Common myeloid progenitor, CD34-positive (primary cell): ENCODE measurements at regions of chr1 and their contacts with region 1.

Region 1: GRCh38 chr1:45339789-45340570 is at the starts of genes MUTYH and TOE1:
- DNase-seq: peak; percentile 90 to 95 (median 93)
- H3K4me3 ChIP-seq: peak within 1 kb of the TSS; percentile 49 to 95 (median 91)
- H3K27ac ChIP-seq: peak within 1 kb of the TSS; percentile 92 to 96
- H3K4me1 ChIP-seq: peaks cover 15 to 38% (median 34%) of the 10 kb centered on the region in 4 experiments
- H3K27me3 ChIP-seq: no peaks in the 10 kb centered on the region

Region 2: DNA sequence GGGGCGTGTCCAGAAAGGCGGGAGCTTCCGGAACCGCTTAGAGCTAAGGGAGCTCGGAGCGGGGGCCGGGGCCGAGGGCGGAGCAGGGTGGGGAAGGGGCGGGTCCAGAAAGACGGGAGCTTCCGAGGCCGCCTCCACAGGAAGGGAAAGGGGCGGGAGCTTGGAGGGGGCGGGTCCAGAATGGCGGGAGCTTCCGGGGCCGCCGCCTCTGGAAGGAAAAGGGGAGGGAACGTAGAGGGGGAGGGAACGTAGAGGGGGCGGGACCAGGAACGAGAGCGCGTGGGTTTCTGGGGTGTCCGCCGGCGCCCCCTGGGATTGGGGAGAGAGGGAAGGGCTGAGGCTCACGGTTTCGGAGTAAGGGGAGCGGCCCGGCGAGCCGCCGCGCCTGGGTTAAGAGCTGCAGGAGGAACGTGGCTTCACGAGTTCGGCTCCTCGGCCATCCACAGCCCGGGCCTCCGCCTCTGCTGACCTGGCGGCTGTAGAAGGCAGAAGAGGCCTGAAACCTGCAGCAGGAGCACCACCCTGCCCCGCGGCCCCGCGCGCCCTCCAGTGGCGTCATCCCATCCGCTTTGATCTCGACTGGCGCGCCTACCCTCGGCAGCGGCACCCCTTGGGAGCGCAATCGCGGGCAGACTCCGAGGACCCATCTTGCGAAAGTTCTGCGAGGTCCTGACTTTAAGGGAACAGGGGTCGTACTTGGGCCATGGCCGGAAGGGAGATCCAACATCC is 36.2 kb before region 1 on chr1:
- CTCF ChIA-PET with region 1: interaction called, 6 read pairs
- POLR2A ChIA-PET with region 1: interaction called, 12 read pairs
- DNase-seq: peak; percentile 97 to 99 (median 98)
- H3K4me3 ChIP-seq: peak overlapping the region; percentile 53 to 90 (median 72)
- H3K27ac ChIP-seq: peak overlapping the region; percentile 69 to 88
- H3K4me1 ChIP-seq: peaks cover 2 to 24% (median 20%) of the 10 kb centered on the region in 4 experiments
- H3K27me3 ChIP-seq: no peaks in the 10 kb centered on the region

Region 3: DNA sequence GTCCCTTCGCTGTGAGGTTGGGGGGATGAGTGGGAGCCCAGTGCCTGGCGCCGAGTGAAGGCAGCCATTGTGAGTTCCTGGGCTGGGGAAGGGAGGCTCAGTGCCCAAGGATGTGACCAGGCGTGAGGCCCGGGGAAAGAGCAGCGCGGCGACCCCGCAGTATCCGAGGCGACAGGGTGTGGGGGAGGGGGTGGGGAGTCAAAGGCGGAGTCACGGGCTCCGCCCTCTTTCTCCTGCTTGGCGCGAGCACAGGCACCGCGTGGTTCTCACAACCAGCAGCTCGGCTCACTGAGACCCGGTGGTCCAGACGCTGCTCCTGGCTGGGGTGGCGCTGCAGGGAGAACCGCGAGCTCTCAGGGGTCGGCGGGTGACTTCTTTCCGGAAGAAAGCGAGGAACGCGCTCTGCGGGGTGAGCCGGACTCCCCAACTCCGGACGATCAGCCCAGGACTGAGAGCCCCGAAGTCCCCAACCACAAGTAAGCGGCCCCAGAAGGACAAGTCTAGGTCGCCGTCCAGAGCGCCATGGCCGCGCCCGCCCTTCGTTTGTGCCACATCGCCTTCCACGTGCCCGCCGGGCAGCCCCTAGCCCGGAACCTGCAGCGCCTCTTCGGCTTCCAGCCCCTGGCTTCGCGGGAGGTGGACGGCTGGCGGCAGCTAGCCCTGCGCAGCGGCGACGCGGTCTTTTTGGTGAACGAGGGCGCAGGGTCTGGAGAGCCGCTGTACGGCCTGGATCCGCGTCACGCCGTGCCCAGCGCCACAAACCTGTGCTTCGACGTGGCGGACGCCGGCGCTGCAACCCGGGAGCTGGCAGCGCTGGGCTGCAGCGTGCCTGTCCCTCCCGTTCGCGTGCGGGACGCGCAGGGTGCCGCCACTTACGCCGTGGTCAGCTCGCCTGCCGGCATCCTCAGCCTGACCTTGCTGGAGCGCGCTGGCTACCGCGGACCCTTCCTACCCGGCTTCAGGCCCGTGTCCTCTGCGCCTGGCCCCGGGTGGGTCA is 13.1 kb before region 1 on chr1 and contains the start of gene HPDL:
- CTCF ChIA-PET with region 1: interaction called, 12 read pairs
- POLR2A ChIA-PET with region 1: interaction called, 18 read pairs
- DNase-seq: peak; percentile 73 to 87 (median 87)
- H3K4me3 ChIP-seq: peak within 1 kb of the TSS; percentile 46 to 84 (median 76)
- H3K27ac ChIP-seq: no peak within 1 kb of the TSS
- H3K4me1 ChIP-seq: peaks cover 9 to 31% (median 24%) of the 10 kb centered on the region in 4 experiments
- H3K27me3 ChIP-seq: no peaks in the 10 kb centered on the region